ENCODE measurements at regions of chr15 and their contacts with region 1.

Region 1: GRCh38 chr15:32659340-32660155 is 18.0 kb downstream of the SCG5 start:
- DNase-seq: no peak
- H3K4me3 Mint-ChIP-seq: no peak overlapping the region
- H3K27ac Mint-ChIP-seq: no peak overlapping the region
- H3K4me1 Mint-ChIP-seq: peaks cover 10% of the 10 kb centered on the region
- H3K27me3 Mint-ChIP-seq: no peaks in the 10 kb centered on the region

Region 2: GRCh38 chr15:32643907-32644445 is 15.6 kb before region 1 on chr15:
- CTCF ChIA-PET with region 1: interaction called, 32 read pairs
- POLR2A ChIA-PET with region 1: no interaction called
- intact Hi-C with region 1: no loop called
- DNase-seq: no peak
- H3K4me3 Mint-ChIP-seq: no peak overlapping the region
- H3K27ac Mint-ChIP-seq: no peak overlapping the region
- H3K4me1 Mint-ChIP-seq: no peaks in the 10 kb centered on the region
- H3K27me3 Mint-ChIP-seq: no peaks in the 10 kb centered on the region

Region 3: DNA sequence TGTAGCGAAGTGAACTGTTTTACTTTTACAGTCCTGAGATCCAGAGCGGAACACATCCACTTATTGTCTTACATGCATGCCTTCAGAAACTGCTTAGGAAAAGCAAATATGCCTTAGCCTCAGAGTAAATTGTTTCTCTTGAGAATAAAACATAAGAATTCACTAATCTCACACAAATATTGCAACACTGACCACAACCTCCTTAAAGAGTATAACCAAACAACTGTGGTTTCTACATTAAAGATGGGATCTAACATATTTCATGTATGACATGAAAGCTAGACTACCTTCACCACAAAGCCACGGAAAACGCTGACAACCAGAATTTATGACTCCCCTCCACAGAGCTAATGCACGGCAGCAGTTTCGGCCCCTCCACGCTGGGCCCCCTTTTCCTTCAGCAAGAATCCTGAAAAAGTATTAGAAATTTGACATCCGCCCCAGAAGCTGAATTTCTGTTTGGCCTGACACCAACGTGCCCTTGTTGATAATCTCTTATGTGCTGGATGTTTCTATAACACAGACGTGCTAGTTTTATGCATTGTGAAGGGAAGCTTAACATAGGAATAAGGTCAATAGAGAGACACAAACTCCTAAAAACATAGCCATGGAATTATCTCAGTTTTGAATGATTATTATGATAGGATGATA is 142.9 kb after region 1 on chr15:
- CTCF ChIA-PET with region 1: no interaction called
- POLR2A ChIA-PET with region 1: no interaction called
- intact Hi-C with region 1: no loop called
- DNase-seq: no peak
- H3K4me3 Mint-ChIP-seq: no peak overlapping the region
- H3K27ac Mint-ChIP-seq: no peak overlapping the region
- H3K4me1 Mint-ChIP-seq: peaks cover 2% of the 10 kb centered on the region
- H3K27me3 Mint-ChIP-seq: peaks cover 12% of the 10 kb centered on the region

Region 4: DNA sequence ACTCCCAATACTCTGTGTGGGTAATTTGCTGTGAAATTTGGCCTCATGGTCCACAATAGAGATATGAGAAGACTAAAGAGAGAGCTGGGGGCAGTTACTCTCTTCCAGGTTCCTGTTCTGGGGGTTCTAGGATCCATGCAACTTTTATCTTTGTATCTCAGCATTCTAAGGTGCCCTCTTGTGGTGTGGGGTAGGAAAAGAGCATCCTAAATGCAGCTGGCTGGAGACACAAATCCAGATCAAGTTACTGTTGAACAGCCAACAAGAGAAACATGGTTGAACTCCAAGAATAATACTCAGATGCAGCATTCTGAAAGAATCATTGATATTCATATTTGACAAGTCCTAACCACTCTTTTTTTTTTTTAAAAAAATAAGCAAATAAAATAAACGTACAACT is 296.5 kb after region 1 on chr15:
- CTCF ChIA-PET with region 1: interaction called, 4 read pairs
- POLR2A ChIA-PET with region 1: no interaction called
- intact Hi-C with region 1: loop called (anchors 10 kb)
- DNase-seq: no peak
- H3K4me3 Mint-ChIP-seq: no peak overlapping the region
- H3K27ac Mint-ChIP-seq: no peak overlapping the region
- H3K4me1 Mint-ChIP-seq: no peaks in the 10 kb centered on the region
- H3K27me3 Mint-ChIP-seq: peaks cover 9% of the 10 kb centered on the region

Region 5: GRCh38 chr15:32970847-32971246 is 311.3 kb after region 1 on chr15:
- CTCF ChIA-PET with region 1: no interaction called
- POLR2A ChIA-PET with region 1: no interaction called
- intact Hi-C with region 1: no loop called
- DNase-seq: no peak
- H3K4me3 Mint-ChIP-seq: no peak overlapping the region
- H3K27ac Mint-ChIP-seq: no peak overlapping the region
- H3K4me1 Mint-ChIP-seq: no peaks in the 10 kb centered on the region
- H3K27me3 Mint-ChIP-seq: no peaks in the 10 kb centered on the region

Region 6: GRCh38 chr15:32994810-32995424 is 335.4 kb after region 1 on chr15:
- CTCF ChIA-PET with region 1: interaction called, 33 read pairs
- POLR2A ChIA-PET with region 1: no interaction called
- intact Hi-C with region 1: no loop called
- DNase-seq: no peak
- H3K4me3 Mint-ChIP-seq: no peak overlapping the region
- H3K27ac Mint-ChIP-seq: no peak overlapping the region
- H3K4me1 Mint-ChIP-seq: no peaks in the 10 kb centered on the region
- H3K27me3 Mint-ChIP-seq: peaks cover 11% of the 10 kb centered on the region

Region 7: GRCh38 chr15:33700695-33701304 is 1041.3 kb after region 1 on chr15:
- CTCF ChIA-PET with region 1: interaction called, 21 read pairs
- POLR2A ChIA-PET with region 1: no interaction called
- intact Hi-C with region 1: no loop called
- DNase-seq: peak; percentile 71
- H3K4me3 Mint-ChIP-seq: no peak overlapping the region
- H3K27ac Mint-ChIP-seq: no peak overlapping the region
- H3K4me1 Mint-ChIP-seq: no peaks in the 10 kb centered on the region
- H3K27me3 Mint-ChIP-seq: peaks cover 12% of the 10 kb centered on the region

Measured in activated CD4-positive, alpha-beta memory T cell treated with anti-CD3 and anti-CD28 coated beads for 36 hours (primary cell).